Cardiac septum (tissue), 1 donor: ENCODE measurements at regions of chr15 and their contacts with region 1.

Region 1: GRCh38 chr15:70569091-70569621 is 194.2 kb downstream of the UACA start:
- DNase-seq: no peak

Region 2: GRCh38 chr15:70426105-70426821 is 142.9 kb before region 1 on chr15:
- intact Hi-C with region 1: no loop called
- DNase-seq: no peak

Region 3: GRCh38 chr15:70670680-70671079 is 101.5 kb after region 1 on chr15:
- intact Hi-C with region 1: loop called (anchors 10 kb)
- DNase-seq: no peak

Region 4: GRCh38 chr15:70815644-70816043 is 246.5 kb after region 1 on chr15:
- intact Hi-C with region 1: loop called (anchors 10 kb)
- DNase-seq: no peak